ENCODE measurements at regions of chr9 and their contacts with region 1.

Region 1: GRCh38 chr9:36008774-36009300 is 27.9 kb upstream of the RECK start:
- H3K4me3 ChIP-seq: no peak overlapping the region
- H3K27ac ChIP-seq: no peak overlapping the region
- H3K4me1 ChIP-seq: no peaks in the 10 kb centered on the region
- CTCF ChIP-seq: 0 out of 2 replicates have a peak, but pooled peaks have one; percentile 16

Region 2: GRCh38 chr9:35954942-35955546 is 53.8 kb before region 1 on chr9:
- CTCF ChIA-PET with region 1: interaction called, 30 read pairs
- POLR2A ChIA-PET with region 1: no interaction called
- H3K4me3 ChIP-seq: no peak overlapping the region
- H3K27ac ChIP-seq: no peak overlapping the region
- H3K4me1 ChIP-seq: no peaks in the 10 kb centered on the region
- CTCF ChIP-seq: peak; percentile 51; the same call in 1 of the 2 replicates

Region 3: GRCh38 chr9:35996358-35996975 is 12.4 kb before region 1 on chr9:
- CTCF ChIA-PET with region 1: interaction called, 42 read pairs
- POLR2A ChIA-PET with region 1: no interaction called
- H3K4me3 ChIP-seq: no peak overlapping the region
- H3K27ac ChIP-seq: no peak overlapping the region
- H3K4me1 ChIP-seq: no peaks in the 10 kb centered on the region
- CTCF ChIP-seq: no peak

Region 4: GRCh38 chr9:36029765-36030528 is 21.1 kb after region 1 on chr9:
- CTCF ChIA-PET with region 1: interaction called, 104 read pairs
- POLR2A ChIA-PET with region 1: no interaction called
- H3K4me3 ChIP-seq: no peak overlapping the region
- H3K27ac ChIP-seq: no peak overlapping the region
- H3K4me1 ChIP-seq: no peaks in the 10 kb centered on the region
- CTCF ChIP-seq: no peak

Region 5: DNA sequence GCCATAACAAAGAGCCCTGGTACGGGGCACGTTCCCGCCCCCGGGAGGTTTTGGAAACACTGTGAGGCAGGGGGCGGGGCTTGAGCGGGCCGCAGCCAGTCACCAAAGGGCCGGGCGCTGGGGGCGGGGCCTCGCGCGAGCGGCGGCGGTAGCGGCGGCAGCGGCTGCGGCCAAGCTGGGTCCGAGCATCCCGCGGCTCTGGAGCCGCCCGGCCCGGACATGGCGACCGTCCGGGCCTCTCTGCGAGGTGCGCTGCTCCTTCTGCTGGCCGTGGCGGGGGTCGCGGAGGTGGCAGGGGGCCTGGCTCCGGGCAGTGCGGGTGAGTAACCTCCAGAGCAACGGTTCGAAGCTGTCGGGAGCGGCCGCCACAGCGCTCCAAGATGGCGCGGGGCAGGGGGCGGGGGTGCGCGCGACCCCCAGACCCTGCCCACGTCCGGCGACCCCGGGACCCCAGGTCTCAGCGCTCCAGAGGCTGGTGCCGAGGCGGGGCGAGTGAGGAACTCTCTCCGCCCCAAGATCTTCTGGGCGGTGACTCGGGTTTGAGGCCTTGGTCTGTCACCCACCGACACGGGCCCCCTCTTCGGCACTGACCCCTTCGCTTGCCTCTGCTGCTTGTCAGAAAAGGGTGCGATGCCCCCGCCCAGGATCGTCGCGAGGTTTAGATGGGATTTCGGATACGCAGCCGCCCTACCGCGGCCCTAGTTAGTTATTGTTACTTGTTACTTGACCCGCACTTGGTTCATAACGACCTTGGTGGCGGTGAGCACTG is 28.1 kb after region 1 on chr9 and contains the start of gene RECK:
- CTCF ChIA-PET with region 1: interaction called, 11 read pairs
- POLR2A ChIA-PET with region 1: no interaction called
- H3K4me3 ChIP-seq: peak within 1 kb of the TSS; percentile 94
- H3K27ac ChIP-seq: peak within 1 kb of the TSS; percentile 55
- H3K4me1 ChIP-seq: peaks cover 6% of the 10 kb centered on the region
- CTCF ChIP-seq: no peak

Region 6: DNA sequence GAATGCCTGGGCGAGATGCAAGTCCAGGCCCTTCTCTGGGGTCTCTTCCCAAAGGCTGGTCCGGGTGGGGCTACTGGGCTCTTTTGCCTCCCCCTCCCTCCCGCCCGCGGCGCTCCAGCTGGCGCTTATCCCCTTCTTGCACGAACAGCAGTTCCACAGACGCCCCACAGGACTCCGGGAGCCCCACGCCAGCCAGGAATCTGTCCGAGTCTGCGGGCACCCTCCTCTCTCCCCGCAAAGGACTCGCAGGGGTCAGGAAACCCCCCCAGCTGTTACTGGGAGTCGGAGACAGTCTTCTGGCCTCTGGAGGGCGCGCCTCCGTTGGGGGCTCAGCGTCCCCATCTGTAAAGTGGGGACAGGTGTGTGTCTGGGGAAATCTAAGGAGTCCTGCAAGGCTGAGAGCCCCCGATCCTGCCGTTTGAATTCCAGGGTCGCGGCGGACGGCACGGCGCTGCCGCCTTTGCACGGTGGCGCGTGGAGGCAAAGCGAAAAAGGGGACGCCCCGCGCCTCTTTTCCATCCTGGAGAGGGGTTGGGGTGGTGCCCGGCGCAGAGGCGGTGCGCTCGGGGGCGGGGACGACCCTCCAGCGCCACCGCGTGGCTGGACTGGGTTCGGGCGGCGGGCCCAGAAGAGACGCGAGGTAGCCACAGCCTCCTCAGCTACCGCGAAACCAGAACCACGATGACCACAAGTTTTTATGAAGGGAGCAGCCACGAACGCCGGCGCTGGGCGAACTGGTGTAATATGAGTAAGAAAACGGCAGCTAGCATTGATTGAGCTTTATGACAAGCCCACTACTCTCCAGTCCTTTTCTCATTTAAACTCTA is 157.5 kb after region 1 on chr9:
- CTCF ChIA-PET with region 1: interaction called, 51 read pairs
- POLR2A ChIA-PET with region 1: no interaction called
- H3K4me3 ChIP-seq: peak overlapping the region; percentile 21; the same call in 1 of the 2 replicates
- H3K27ac ChIP-seq: no peak overlapping the region
- H3K4me1 ChIP-seq: peaks cover 4% of the 10 kb centered on the region; the same call in 1 of the 2 replicates
- CTCF ChIP-seq: peak; percentile 83